Head of caudate nucleus (tissue), 42 donors: ENCODE measurements at regions of chr10 and their contacts with region 1.

Region 1: DNA sequence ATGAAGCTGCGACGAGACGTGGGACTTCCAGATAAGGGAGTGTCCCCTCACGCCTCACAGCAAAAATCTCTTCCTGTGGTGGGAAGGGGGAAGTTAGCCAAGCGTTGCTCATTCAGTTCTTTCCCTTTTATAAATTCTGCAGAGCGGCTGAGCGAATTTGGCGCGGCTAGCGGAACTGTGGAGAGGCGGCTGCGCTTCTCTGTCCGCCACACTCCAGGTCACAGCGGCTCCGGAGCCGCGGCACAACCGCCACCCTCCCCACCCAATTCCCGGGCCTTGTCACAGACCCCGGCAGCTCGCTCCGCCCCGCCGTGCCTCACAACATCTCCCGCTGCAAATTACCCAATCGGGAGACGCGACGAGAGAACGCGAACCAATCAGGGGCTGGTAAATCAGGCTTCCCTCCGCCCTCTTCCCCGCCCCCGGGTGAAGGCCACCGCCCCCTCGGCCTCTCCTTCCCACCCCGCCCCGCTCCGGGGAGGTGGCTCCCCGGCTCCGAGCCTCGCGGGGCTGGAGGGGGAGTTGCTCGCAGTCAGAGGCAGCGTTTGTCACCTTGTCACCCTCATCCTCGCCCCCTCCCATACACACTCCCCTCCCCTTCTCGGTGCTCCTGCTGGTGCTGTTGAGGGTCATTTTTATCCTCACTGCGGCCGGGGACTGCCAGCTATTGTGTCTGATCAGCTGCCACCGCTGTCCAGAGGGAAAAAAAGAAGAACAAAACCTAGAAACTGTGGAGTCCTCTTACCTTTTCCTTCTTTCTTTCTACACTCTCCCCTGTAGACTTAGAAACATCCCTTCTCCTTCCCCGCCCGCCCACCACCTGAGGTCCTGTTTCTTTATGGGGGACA is 918 bp upstream of the ARHGAP21 start:
- DNase-seq: peak; percentile 98 to 100 (median 99)

Region 2: DNA sequence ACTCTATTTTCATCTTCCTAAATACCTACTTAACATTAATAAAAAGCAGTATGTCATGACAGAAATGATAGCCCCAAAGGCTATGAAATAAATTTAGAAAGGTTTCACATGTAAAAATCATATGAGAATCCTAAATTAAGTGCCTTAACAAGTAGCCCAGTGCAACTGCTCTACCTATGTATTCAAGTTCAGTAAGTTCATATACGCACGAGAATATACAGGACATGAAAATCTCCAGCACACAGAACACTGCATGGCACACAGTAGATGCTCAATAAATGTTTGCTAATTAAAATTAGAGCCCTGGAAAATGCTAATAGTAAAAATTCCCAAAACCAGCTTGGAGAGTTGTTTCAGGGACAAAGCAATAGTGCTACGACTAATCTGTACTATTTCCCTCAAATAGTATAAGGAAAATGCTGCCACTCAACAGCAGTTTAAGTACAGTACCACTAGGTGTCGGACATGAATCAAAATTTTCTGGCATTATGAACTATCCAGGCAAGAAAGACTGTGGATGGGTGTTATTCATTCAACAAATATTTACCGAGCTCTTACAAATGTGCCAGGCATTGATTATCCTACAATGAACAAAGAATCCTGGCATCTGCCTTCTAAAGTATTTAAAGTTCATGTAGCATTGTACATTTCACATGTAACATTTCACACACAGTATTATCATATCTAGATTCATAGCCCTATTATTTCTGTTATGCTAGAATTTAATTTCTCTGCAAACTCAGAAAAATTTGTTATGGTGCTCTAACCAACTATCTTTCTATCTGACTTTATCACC is 81.8 kb before region 1 on chr10:
- intact Hi-C with region 1: loop called (anchors 10 kb)
- DNase-seq: peak in 6 of 42 donors; percentile 16 to 65 (median 32)

Region 3: GRCh38 chr10:24806262-24806661 is 81.7 kb after region 1 on chr10:
- intact Hi-C with region 1: loop called (anchors 10 kb)
- DNase-seq: peak in 41 of 42 donors; percentile 12 to 89 (median 66)

Region 4: DNA sequence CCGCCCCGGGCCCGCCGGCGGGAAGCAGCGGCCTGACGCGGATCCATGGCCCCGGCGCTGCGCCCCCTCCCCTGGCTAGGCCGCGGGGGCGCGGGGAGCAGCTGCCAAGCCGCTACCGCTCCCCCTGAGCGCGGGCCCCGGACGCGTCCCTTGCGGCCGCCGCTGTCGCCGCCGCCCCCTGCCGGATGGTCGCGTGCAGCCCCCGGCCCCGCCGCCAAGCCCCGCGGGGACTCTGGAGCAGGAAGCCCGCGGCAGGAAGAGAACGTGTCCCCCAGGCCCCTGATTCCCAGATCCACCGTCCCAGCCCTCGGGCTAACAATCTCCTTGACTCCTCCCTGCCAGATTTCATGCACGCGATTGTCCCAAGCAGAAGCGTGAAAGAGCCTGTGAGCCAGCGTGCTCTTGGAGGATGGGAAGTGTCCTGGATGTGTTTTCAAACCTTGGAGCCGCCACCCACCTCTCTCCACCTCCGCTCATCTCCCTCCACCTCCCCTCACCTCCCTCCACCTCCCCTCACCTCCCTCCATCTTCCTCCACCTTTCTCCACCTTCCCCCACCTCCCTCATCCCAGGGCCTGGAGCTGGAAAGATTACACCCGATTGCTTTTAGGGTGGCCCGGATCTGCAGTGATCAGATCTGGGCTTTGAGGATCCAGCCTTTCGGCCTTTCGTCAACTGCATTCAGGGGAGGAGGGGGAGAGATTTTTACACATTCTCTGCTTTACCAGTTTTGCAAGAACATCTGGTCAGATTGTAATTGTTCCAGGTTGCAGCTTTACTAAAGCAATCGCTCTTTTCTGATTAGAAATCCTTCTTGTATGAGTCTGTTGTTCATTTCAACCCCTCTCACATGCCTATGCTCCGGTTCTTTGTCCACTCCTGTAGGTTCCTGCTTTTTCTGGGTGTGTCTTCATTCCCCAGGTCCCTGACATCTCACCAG is 228.4 kb after region 1 on chr10:
- intact Hi-C with region 1: loop called (anchors 5 kb)
- DNase-seq: peak in 39 of 42 donors; percentile 21 to 85 (median 66)

Region 5: DNA sequence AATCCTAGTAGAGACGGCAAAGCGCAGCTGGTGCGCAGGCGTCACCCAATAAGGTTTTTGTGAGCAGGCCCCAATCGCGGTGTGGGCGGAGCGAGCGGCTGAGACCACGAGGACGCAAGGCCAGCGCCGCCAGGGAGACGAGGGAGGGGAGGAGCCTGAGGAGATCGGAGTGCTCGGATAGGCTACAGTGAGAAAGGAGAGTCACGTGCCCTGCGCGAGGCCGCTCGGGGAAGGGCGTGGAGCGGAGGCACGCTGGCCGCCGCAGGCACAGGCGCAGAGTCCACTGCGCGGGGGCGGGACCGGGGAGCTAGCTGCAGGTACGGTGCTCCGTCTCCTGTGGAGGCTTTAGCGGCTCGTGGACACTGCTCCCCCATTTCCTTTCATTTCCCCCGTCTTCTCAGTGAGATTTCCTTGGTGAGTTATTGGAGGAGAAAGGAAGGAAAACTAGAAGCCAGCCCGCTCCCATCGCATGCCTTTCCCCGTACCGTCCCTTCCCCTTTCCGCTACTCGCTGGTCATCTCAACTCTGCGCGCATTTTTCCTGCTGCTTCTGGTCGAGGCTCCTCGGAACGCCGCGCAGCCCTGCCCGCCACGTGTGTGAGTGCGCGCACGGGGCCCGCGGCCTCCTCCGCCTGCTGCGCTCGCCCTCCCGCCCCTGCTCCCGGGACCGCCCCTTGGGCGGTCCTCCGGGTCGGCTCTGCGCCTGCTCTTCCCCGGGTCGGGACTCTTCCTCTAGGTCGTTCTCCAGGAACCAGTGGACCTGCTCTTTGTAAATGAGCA is 292.0 kb after region 1 on chr10 and contains the start of gene THNSL1:
- intact Hi-C with region 1: loop called (anchors 5 kb)
- DNase-seq: peak; percentile 96 to 99 (median 99)

Region 6: GRCh38 chr10:25104441-25104840 is 379.8 kb after region 1 on chr10:
- intact Hi-C with region 1: no loop called
- DNase-seq: peak in 2 of 42 donors; percentile 3 to 19